ENCODE measurements at regions of chr6 and their contacts with region 1.

Region 1: DNA sequence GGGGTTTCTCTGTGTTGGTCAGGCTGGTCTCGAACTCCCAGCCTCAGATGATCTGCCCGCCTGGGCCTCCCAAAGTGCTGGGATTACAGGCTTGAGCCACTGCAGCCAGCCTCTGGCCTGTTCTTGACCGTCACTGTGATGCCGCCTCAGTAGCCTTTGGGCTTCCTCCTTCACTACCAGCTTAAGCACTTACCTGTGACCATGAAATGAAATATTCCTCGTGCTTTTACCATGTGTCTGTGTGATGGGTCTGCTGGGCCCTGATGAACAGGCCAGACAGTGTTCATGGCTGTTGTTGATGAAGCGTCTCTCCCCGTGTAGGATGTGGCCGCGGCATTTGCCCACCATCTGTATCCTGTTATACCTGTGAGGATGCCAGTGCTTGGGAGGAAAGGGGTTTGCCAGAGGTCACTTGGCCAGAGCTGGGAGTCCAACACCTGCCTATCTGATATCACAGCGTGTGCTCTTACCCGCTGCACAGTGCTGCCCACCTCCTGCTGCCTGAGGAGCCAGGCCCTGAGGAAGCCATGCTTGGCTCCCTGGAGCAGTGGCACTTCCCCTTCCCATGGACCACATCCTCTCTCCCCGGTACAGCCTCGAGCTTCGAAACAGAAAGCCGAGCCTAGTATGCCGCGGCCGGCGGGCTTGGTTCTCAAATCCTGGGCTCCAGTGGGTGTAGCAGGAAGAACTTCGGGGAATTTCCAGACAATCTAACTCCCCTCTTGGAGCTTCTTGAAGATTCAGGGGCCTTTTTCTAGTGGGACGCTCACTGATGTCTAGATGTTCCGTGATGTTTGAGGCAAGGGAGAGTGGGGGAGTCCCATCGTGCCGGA is 167.9 kb downstream of the ZDHHC14 start:
- DNase-seq: peak in 1 of 3 donors; percentile 31
- ATAC-seq: peak; percentile 50 to 62 (median 55)
- H3K4me3 ChIP-seq: no peak overlapping the region
- H3K27ac ChIP-seq: no peak overlapping the region
- H3K4me1 ChIP-seq: no peaks in the 10 kb centered on the region
- H3K27me3 ChIP-seq: no peaks in the 10 kb centered on the region
- CTCF ChIP-seq: no peak
- POLR2A ChIP-seq: no peak

Region 2: GRCh38 chr6:157597446-157598312 is 48.8 kb after region 1 on chr6:
- intact Hi-C with region 1: loop called in 1 of 2 experiments (anchors 10 kb)
- DNase-seq: peak in 2 of 3 donors; percentile 56 to 61
- ATAC-seq: peak; percentile 87 to 94 (median 92)
- H3K4me3 ChIP-seq: no peak overlapping the region
- H3K27ac ChIP-seq: peak overlapping the region in 1 of 3 donors; percentile 20
- H3K4me1 ChIP-seq: peaks cover 0 to 4% (median 0%) of the 10 kb centered on the region in 4 donors
- H3K27me3 ChIP-seq: no peaks in the 10 kb centered on the region
- CTCF ChIP-seq: peak; percentile 62 to 70 (median 62)
- POLR2A ChIP-seq: no peak

Measured in right lobe of liver (tissue), 6 donors.